ENCODE measurements at regions of chr22 and their contacts with region 1.

Region 1: DNA sequence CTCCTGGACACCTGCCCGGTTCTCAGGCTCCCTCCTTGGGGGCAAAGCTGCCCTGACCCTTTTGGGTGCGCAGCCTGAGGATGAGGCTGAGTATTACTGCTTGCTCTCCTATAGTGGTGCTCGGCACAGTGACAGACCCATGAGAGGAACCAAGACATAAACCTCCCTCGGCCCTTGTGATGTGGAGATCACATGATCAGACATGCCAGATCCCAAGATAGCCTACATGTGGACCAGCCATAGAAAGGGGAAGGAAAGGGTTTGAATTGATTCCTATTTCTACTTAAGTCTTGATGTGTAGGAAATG is 125.3 kb downstream of the VPREB1 start:
- DNase-seq: no peak
- H3K4me3 ChIP-seq: no peak overlapping the region
- H3K27ac ChIP-seq: no peak overlapping the region
- H3K4me1 ChIP-seq: no peaks in the 10 kb centered on the region
- H3K27me3 ChIP-seq: no peaks in the 10 kb centered on the region
- CTCF ChIP-seq: no peak
- POLR2A ChIP-seq: no peak

Region 2: DNA sequence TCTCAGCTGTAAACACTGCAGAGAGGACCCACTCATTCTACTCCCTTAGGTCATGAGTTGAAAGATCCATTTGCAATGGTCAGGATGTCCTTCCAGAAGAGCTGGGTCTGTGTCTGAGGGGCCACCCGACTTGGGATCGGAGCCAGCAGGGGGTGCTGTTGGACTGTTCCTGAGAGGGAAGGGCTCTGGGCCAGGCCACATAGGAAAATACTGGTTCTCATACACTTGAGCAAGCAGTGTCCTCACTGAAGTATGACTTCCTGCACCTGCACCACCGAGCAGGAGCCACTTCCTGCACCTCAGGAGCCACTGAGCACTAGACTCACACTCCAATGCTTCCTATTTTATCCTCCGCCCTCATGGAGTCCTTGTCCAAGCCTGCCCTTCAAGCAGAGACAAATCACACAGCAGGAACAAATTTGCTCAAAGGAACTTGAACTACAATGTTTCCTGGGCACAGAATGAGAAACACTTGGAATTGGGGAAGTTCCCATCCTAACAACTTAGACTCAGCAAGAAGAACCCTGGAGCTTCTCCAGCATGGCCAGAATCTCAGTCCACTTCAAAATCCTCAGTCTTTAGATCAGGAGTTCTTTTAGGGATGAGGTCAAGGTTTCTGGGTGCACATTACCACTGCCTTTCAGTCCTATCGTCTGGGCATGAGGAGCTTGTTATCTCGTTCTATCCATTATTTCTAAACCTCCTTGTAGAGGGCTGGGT is 161.9 kb before region 1 on chr22:
- intact Hi-C with region 1: loop called (anchors 10 kb)
- DNase-seq: peak in 1 of 2 donors; percentile 62
- H3K4me3 ChIP-seq: no peak overlapping the region
- H3K27ac ChIP-seq: no peak overlapping the region
- H3K4me1 ChIP-seq: no peaks in the 10 kb centered on the region
- H3K27me3 ChIP-seq: peaks cover 0 to 8% of the 10 kb centered on the region in 2 donors
- CTCF ChIP-seq: peak in 1 of 3 donors; percentile 43
- POLR2A ChIP-seq: no peak